OCI-LY7 (cell line): ENCODE measurements at regions of chr22 and their contacts with region 1.

Region 1: DNA sequence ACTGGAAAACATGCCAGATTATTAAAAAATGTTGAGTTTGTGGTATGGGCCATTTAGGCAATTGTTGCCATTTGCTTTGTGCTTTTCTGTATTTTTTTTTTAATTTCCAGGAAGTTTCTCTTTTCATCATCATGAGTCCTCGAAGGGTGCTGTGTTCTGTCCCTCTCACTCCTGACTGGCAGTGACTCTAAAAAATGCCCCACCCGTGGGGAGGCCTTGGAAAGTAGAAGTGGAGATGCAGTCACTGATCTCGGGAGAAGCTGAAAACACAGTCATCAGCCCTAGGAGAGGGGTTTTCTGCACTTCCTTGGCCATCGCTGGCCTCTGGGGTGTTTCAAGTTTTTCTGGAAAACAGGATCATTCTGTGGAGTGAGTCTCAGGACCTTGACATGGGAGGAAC is 98.5 kb upstream of the GRK3 start:
- DNase-seq: no peak
- H3K4me3 ChIP-seq: no peak overlapping the region
- H3K27ac ChIP-seq: no peak overlapping the region
- H3K4me1 ChIP-seq: no peaks in the 10 kb centered on the region
- CTCF ChIP-seq: no peak

Region 2: DNA sequence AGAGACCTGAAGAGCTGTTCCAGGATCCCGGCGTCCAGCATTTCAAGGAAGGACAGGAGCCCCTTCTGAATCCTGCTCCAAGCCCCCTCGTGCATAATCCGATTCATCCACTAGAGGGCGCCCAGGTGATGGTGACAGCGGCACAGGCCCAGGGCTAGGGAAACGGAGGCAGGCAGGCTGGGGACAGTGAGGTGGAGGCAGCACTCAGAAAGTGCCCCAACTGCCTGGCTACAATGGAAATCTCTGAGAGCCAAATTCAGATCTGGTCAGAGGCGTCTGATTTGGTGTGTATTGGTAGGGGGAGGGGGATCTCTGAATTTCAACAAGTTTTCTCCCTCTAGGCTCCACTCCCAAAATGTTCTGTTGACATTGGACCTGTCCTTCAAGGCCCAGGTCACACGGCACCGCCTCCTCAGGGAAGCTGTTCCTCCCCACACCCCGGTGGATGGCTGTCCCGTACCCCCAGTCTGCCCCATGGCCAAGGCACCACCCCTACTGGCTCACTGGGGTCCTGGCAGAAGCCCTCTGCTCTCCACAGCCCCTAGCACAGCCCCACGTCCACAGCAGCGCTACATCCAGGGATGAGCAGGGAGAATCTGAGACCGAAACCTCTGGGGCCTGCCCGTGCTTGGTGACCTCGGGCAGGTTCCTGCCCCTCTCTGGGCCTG is 103.6 kb before region 1 on chr22:
- CTCF ChIA-PET with region 1: no interaction called
- POLR2A ChIA-PET with region 1: no interaction called
- intact Hi-C with region 1: no loop called
- DNase-seq: peak; percentile 66
- H3K4me3 ChIP-seq: no peak overlapping the region
- H3K27ac ChIP-seq: no peak overlapping the region
- H3K4me1 ChIP-seq: no peaks in the 10 kb centered on the region
- CTCF ChIP-seq: peak; percentile 93

Region 3: GRCh38 chr22:25709758-25710157 is 243.8 kb after region 1 on chr22:
- CTCF ChIA-PET with region 1: no interaction called
- POLR2A ChIA-PET with region 1: no interaction called
- intact Hi-C with region 1: loop called (anchors 5 kb)
- DNase-seq: peak; percentile 7
- H3K4me3 ChIP-seq: no peak overlapping the region
- H3K27ac ChIP-seq: no peak overlapping the region
- H3K4me1 ChIP-seq: no peaks in the 10 kb centered on the region
- CTCF ChIP-seq: no peak